Transverse colon (tissue), 4 donors: ENCODE measurements at regions of chr1 and their contacts with region 1.

Region 1: DNA sequence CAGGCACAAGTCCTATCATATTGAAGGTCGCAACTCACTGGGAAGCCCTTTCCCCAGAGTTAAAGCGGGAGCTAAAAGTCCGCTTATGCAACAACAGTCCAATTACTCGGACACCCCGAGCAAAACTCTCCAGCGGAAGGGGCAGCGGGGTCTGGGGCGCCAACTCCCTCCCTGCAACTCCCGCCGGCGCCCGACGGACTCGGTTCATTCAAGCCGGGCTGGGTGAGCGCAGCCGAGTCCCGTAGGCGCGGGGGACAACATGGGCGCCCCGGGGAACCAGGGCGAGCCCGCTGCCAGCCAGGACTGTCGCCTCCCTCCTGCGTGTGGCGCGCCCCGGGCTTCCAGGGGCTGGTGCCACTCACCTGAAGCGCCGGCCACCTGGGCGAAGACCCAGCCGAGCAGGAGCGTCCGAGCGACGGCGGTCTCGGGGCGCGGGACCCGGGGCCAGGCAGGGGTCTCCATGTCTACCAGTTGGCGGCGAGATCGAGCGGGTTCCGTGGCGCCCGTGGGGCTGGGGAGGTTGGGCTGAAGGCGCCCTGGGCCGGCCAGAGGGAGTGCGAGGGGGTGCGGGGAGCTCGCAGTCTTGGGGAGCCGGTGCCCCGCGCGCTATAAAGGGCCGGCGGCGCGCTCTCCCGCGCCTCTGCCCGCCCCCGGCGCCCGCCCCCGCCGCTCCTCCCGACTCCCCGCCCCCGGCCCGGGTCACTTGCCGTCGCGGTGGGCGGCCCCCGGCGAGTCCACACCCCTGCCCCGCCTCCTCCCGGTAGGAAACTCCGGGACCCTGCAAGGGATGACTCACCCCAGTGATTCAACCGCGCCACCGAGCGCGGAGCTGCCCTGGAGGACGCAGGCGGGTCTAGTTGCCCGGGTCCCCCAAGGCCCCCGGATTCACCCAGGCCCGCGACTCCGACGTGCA is at the start of gene F3:
- DNase-seq: peak; percentile 95
- H3K4me3 ChIP-seq: peak within 1 kb of the TSS; percentile 62 to 89 (median 76)
- H3K27ac ChIP-seq: peak within 1 kb of the TSS; percentile 85 to 94 (median 90)
- H3K4me1 ChIP-seq: peaks cover 6 to 17% (median 11%) of the 10 kb centered on the region in 4 donors
- H3K27me3 ChIP-seq: no peaks in the 10 kb centered on the region
- CTCF ChIP-seq: peak in 1 of 5 experiments; percentile 7
- EP300 ChIP-seq: no peak
- POLR2A ChIP-seq: peak; percentile 95
- total RNA-seq, gene F3: 35.9 to 105 (median 59.3) TPM

Region 2: DNA sequence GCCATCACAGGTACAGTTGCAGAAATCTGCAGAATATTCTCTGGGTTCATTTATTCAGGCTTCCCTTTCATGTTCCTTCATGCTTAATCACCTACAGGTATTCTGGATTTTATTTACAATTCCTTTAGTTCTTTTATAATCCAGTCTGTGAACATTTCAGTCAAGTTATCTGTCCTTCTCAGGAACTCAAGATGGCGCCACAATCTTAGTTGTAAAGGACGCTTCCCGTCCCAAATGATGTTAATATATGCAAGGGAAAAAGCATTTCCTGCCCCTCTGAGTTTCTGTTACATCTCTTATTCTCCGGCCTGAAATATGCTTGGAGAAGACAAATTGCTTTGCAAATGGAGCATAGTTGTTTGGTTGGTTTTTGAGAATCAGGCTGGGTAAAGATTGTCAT is 19.1 kb before region 1 on chr1:
- in situ Hi-C with region 1: no loop called
- intact Hi-C with region 1: loop called (anchors 1 kb)
- DNase-seq: no peak
- H3K4me3 ChIP-seq: no peak overlapping the region
- H3K27ac ChIP-seq: no peak overlapping the region
- H3K4me1 ChIP-seq: no peaks in the 10 kb centered on the region
- H3K27me3 ChIP-seq: no peaks in the 10 kb centered on the region
- CTCF ChIP-seq: peak; percentile 23 to 44 (median 37)
- EP300 ChIP-seq: no peak
- POLR2A ChIP-seq: no peak